Activated CD4-positive, alpha-beta T cell treated with anti-CD3 and anti-CD28 coated beads for 36 hours (primary cell): ENCODE measurements at regions of chr17 and their contacts with region 1.

Region 1: GRCh38 chr17:78168242-78168902 is at the start of gene SYNGR2:
- DNase-seq: peak; percentile 93
- ATAC-seq: peak; percentile 79
- H3K4me3 Mint-ChIP-seq: peak within 1 kb of the TSS; percentile 71
- H3K27ac Mint-ChIP-seq: peak within 1 kb of the TSS; percentile 69
- H3K4me1 Mint-ChIP-seq: peaks cover 35% of the 10 kb centered on the region
- H3K27me3 Mint-ChIP-seq: no peaks in the 10 kb centered on the region
- total RNA-seq, gene SYNGR2: 79.1 to 89.2 TPM

Region 2: DNA sequence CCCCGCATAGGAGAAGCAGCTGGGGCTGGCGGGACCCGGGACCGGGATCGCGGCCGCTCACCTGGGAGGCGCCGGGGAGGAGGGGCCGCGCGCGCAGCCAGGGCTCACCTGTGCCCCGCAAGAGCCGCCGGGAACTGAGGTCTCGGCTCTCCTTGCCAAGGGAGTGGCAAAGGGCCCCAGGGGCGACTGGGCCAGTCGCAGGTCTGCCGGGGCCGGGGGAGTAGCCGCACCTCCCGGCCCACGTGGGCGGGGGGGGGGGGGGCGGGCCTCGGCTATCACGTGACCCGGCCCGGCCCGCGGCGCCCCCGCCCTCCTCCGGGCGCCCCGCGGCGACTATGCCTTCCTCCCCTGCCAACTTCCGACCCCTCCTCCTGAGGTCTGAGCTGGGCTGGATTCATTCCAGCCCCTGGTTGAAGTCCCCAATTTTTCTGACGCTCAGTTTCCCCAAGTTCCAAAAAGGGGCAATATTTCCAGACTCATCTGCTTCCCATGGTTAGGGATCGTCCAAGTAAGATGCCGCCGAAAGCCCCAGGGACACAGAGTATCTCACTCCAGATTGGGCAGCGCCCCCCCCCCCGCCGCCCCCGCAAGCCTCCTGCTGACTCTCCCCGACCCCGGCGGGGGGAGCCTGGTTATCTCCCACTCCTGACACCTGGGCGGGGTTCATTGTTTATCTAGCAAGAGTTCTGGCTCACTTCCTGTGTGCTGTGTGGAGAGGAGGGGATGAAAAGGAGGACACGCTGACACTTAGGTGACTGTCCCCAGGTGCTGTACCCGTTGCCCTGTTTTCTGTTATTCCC is 39.6 kb before region 1 on chr17 and contains the start of gene TMC6:
- CTCF ChIA-PET with region 1: interaction called, 3 read pairs
- POLR2A ChIA-PET with region 1: interaction called, 3 read pairs
- intact Hi-C with region 1: loop called (anchors 2 to 5 kb)
- DNase-seq: peak; percentile 87
- ATAC-seq: peak; percentile 31
- H3K4me3 Mint-ChIP-seq: peak within 1 kb of the TSS; percentile 94
- H3K27ac Mint-ChIP-seq: peak within 1 kb of the TSS; percentile 96
- H3K4me1 Mint-ChIP-seq: peaks cover 52% of the 10 kb centered on the region
- H3K27me3 Mint-ChIP-seq: no peaks in the 10 kb centered on the region
- total RNA-seq, gene TMC6: 138 to 145 TPM

Region 3: DNA sequence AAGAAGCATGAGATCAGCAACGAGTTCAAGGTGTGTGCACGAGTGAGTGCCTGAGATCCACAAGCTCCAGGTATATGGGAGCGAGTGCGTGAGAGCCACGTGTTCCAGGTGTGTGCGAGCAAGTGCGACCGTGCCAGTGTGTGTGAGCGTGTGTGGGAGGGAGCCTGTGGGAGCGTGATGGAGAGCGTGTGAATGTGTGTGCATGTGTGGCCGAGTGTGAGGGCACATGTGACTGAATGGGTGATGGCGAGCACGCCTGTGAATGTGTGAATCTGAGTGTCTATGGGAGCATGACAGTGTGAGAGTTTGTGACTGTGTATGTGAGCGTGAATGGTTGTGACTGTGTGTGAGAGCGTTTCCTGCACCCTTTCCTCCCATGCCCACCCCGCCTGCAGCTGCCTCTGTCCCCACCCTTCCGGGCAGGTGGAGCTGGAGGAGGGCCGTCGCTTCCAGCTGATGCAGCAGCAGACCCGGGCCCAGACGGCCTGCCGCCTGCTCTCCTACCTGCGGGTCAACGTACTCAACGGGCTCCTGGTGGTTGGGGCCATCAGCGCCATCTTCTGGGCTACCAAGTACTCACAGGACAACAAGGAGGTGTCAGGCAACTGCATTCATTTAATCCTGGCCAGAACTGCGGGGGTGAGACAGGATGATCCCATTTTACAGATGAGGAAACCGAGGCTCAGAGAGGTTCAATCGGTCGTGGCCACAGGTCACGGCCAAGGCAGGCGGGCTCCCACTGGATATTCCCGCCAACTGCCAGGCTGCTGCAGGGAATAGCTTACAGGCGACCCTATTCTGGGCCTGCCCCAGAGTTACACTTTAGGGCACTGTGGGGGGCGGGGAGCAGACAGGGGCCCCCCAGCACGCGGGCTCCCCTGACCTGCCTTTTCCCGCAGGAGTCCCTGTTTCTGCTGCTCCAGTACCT is 34.1 kb before region 1 on chr17:
- CTCF ChIA-PET with region 1: interaction called, 4 read pairs
- POLR2A ChIA-PET with region 1: no interaction called
- intact Hi-C with region 1: loop called (anchors 2 to 5 kb)
- DNase-seq: peak; percentile 88
- ATAC-seq: peak; percentile 21
- H3K4me3 Mint-ChIP-seq: peak overlapping the region; percentile 94
- H3K27ac Mint-ChIP-seq: peak overlapping the region; percentile 73
- H3K4me1 Mint-ChIP-seq: peaks cover 72% of the 10 kb centered on the region
- H3K27me3 Mint-ChIP-seq: no peaks in the 10 kb centered on the region

Region 4: GRCh38 chr17:78214706-78215061 is 46.3 kb after region 1 on chr17:
- CTCF ChIA-PET with region 1: no interaction called
- POLR2A ChIA-PET with region 1: no interaction called
- intact Hi-C with region 1: loop called in 1 of 2 experiments (anchors 1 kb)
- DNase-seq: no peak
- ATAC-seq: no peak
- H3K4me3 Mint-ChIP-seq: peak overlapping the region; percentile 89
- H3K27ac Mint-ChIP-seq: peak overlapping the region; percentile 78
- H3K4me1 Mint-ChIP-seq: peaks cover 5% of the 10 kb centered on the region
- H3K27me3 Mint-ChIP-seq: no peaks in the 10 kb centered on the region

Region 5: GRCh38 chr17:78541488-78542237 is 373.3 kb after region 1 on chr17:
- CTCF ChIA-PET with region 1: no interaction called
- POLR2A ChIA-PET with region 1: no interaction called
- intact Hi-C with region 1: no loop called
- DNase-seq: no peak
- ATAC-seq: no peak
- H3K4me3 Mint-ChIP-seq: no peak overlapping the region
- H3K27ac Mint-ChIP-seq: no peak overlapping the region
- H3K4me1 Mint-ChIP-seq: peaks cover 7% of the 10 kb centered on the region
- H3K27me3 Mint-ChIP-seq: no peaks in the 10 kb centered on the region